ENCODE measurements at regions of chr2 and their contacts with region 1.

Region 1: DNA sequence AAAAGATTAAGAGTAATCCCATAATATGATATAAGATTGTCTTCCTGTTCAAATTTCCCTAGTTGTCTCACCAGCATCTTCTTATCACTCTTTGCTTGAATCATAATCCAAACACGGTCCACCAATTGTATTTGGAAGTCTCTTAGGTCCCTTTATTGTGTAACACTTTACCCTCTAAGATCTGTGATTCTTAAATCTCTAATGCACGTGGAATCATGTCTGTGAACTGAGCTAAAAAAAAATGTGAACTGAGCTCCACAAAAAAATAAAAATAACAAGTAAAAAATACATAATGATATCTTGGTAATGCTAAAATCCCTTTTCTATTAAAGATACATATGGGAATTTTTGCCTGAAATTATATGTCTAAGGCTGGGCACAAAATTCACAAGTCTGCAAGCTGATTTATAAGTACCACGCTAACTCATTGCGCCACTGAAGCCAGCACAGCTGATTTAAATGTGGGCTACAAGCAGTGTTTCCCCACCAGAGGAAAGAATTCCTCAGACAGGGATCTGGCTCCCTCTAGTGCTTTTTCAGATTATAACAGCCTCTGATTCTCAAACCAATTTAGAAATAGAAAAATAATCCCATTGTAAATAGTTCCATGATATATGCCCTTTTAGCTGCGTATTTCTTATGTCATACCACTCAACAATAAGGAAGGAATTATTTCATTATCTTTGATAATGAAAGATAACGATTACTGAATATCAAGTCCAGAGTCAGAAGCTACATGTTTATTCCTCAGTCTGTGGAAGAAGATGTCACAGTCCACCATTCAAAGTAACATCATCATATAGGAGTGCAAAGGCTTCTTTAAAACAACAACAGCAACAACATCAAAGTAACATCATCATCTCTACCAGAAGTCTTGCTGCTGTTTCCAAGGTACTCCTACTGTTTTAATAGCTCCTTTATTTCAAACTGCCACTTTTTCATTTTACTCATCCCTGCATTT is 22.9 kb downstream of the RBM43 start:
- DNase-seq: peak; percentile 45
- ATAC-seq: peak; percentile 86
- H3K4me3 ChIP-seq: no peak overlapping the region
- H3K27ac ChIP-seq: no peak overlapping the region
- H3K4me1 ChIP-seq: no peaks in the 10 kb centered on the region; a peak in 1 of 4 replicates
- H3K27me3 ChIP-seq: no peaks in the 10 kb centered on the region
- CTCF ChIP-seq: peak; percentile 74 to 87 (median 75)
- POLR2A ChIP-seq: no peak
- RAD21 ChIP-seq: peak; percentile 90

Region 2: DNA sequence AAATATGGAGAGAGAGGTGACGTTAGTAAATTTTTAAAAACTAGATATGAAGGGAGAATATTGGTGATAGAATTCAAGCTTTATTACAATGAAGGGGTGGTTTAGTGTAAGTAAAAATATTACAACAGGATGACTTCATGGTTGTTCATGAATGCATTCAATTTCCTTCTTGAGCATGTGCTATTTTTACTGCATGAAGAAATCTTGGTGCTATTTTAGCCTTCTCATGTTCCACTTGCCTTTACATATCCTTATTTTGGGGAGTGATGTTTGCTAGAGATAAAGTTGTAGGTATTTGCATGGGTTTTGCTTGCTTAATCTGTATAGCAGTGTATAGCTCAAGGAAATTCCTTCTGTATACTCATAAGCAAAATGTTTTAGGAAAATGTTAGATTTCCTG is 1456.2 kb before region 1 on chr2:
- CTCF ChIA-PET with region 1: no interaction called
- POLR2A ChIA-PET with region 1: no interaction called
- RAD21 ChIA-PET with region 1: no interaction called
- intact Hi-C with region 1: loop called (anchors 10 kb)
- DNase-seq: no peak
- ATAC-seq: no peak
- H3K4me3 ChIP-seq: no peak overlapping the region
- H3K27ac ChIP-seq: no peak overlapping the region
- H3K4me1 ChIP-seq: no peaks in the 10 kb centered on the region
- H3K27me3 ChIP-seq: no peaks in the 10 kb centered on the region
- CTCF ChIP-seq: no peak
- POLR2A ChIP-seq: no peak
- RAD21 ChIP-seq: no peak

Region 3: DNA sequence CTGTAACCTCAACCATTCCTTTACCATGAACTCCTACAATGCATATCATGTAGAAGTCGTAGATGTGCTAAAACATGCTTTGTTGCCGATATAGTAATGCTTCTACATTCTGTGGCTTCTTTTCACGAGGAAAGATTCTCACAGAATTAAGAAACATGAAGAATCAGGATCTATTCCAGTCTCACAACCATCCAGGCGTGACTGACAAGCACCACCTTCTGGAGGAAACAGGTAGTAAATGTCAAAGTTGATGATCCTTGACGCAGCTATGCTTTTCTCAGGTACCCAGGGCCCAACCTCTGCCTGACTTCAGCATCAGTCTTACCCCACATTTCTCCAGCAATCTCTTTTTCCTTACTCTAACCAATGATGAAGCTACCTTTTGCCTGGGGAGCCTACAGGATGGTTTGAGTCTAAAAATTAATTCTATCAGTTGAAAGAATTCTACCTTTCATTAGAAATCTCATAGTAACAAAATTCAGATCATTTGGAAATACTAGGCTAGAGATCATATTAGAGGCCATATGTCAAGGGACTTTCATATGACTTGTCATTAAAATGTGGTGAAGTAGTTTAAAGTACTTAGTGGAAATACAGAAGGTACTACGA is 628.0 kb before region 1 on chr2:
- CTCF ChIA-PET with region 1: interaction called, 6 read pairs
- POLR2A ChIA-PET with region 1: no interaction called
- RAD21 ChIA-PET with region 1: no interaction called
- intact Hi-C with region 1: loop called (anchors 2 kb)
- DNase-seq: peak; percentile 36
- ATAC-seq: peak; percentile 94
- H3K4me3 ChIP-seq: no peak overlapping the region
- H3K27ac ChIP-seq: no peak overlapping the region
- H3K4me1 ChIP-seq: no peaks in the 10 kb centered on the region
- H3K27me3 ChIP-seq: no peaks in the 10 kb centered on the region
- CTCF ChIP-seq: peak; percentile 54 to 75 (median 60); a peak in 5 of 6 replicates
- POLR2A ChIP-seq: no peak
- RAD21 ChIP-seq: peak; percentile 80

Region 4: DNA sequence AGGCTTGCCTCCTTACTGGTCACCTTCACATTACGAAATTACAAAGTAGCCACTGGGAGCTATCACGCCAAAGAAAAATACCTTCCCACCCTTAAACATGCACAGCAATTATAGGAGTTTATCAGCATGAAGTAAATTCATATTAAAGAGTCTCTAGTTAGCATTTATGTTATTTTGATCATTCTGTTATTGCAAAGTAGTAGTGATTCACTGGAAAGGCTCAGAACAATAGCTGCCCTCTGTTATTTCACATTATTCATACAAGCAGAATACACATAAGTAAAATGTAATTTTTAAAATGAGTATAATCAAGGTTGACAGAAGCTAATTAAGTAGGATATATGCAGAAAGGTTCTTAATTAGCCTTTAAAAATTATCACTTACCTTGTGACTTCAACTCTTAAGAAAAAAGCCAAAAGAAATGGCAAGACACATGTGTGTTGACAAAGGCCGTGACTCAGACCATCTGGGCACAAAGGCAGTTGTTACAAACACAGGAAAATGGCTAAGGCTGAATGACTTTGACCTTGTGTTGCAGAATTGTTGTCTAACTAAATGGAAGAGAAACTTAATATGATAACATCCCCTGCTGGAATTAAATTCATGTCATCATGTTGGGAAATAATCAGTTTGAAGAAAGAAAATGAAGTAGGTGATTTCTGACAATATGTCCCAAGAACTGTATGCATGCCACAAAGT is 1587.9 kb after region 1 on chr2:
- CTCF ChIA-PET with region 1: no interaction called
- POLR2A ChIA-PET with region 1: no interaction called
- RAD21 ChIA-PET with region 1: no interaction called
- intact Hi-C with region 1: no loop called
- DNase-seq: no peak
- ATAC-seq: no peak
- H3K4me3 ChIP-seq: no peak overlapping the region
- H3K27ac ChIP-seq: no peak overlapping the region
- H3K4me1 ChIP-seq: no peaks in the 10 kb centered on the region
- H3K27me3 ChIP-seq: no peaks in the 10 kb centered on the region
- CTCF ChIP-seq: no peak
- POLR2A ChIP-seq: no peak
- RAD21 ChIP-seq: no peak